ENCODE measurements at regions of chr10 and their contacts with region 1.

Region 1: DNA sequence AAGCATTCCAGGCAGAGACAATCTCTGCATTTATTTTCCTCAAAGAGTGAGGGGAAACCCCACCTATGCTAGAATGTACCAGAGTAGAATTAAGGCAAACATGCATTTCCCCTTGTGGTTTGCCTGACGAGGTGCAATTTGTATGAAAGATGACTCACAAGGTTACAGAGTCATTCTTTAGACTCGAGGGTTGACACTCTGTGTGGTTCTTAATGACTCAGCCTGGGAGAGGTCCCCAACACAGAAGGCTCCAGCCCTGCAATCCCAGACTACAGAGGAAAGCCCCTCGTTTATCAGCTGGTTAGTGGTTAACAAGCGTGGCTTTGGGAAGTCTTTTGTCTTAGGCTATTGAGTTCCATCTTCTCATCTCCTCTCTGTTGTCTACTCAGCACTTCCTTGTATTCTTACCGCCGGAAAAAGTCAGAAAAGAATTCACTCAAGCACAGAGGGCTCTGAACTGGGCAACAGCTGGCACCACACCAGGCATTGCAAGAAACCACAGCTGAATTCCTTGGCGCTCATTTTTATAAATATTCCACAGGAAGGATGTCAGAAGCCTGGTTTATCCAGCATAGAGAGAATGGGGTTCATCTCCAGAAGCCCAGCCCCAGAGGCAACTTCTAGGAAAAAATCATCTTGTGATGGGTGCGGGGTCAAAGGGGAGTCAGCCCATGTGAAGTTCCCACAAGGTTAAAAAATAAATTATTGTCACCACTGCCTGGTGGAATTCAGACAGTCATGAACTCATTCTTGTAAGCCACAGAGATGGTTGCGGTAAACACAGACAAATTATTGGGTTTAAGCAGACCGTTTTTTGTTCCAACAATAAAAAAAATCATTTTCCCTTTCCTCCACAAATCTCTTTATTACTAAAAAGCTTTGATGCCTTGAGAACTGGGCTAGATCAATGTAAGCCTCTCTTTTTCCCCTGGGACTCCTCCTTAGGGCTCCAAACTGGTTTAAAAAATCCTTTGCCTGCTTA is 24.5 kb upstream of the SVIL start:
- DNase-seq: peak; percentile 64
- H3K4me3 Mint-ChIP-seq: no peak overlapping the region
- H3K27ac Mint-ChIP-seq: peak overlapping the region; percentile 27
- H3K4me1 Mint-ChIP-seq: peaks cover 19% of the 10 kb centered on the region
- H3K27me3 Mint-ChIP-seq: peaks cover 14% of the 10 kb centered on the region

Region 2: GRCh38 chr10:29409241-29410057 is 249.8 kb before region 1 on chr10:
- intact Hi-C with region 1: loop called (anchors 1 kb)
- DNase-seq: peak; percentile 36
- H3K4me3 Mint-ChIP-seq: peak overlapping the region; percentile 97
- H3K27ac Mint-ChIP-seq: peak overlapping the region; percentile 89
- H3K4me1 Mint-ChIP-seq: peaks cover 31% of the 10 kb centered on the region
- H3K27me3 Mint-ChIP-seq: no peaks in the 10 kb centered on the region

Region 3: GRCh38 chr10:29470355-29470705 is 188.9 kb before region 1 on chr10:
- intact Hi-C with region 1: no loop called
- DNase-seq: no peak
- H3K4me3 Mint-ChIP-seq: no peak overlapping the region
- H3K27ac Mint-ChIP-seq: no peak overlapping the region
- H3K4me1 Mint-ChIP-seq: peaks cover 28% of the 10 kb centered on the region
- H3K27me3 Mint-ChIP-seq: no peaks in the 10 kb centered on the region

Region 4: DNA sequence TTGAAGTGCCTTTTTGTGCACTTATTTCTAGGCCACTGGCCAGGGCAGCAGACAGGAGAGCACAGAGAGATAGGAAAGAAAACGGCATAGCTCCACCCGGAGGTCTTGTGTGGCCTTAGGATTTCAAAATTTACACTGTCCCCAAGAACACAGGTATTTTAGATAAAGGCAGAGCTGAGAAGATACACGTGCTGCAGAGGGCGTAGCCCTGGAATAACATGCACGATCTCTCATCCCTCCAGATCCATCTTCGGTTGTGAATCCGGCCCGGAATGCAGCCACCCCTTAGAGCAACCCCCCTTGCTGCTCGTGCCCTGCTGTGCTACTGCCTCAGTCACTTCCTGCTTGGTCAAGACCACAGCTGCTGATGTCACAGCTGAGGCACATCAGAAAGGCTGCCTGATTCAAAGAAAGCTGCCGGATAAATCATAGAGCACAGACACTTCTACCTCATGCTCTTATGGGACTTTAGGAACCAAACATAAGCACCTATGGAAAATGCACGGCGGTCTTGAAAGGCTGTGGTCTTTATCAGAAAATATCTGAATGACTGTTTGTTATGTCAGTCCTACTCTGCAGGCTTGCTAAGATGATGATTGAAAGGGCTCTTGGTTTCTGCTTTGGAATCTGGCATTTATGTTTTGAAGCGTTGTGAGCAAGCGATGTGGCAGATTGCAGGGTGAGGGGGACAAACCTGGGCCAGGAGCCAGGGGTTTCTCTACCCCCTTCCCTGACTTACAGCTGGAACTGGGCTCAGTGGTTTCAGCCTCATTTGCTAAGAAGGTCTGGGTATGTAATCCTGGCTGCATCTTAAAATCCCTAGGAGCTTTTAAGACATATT is 176.5 kb before region 1 on chr10:
- intact Hi-C with region 1: loop called (anchors 1 kb)
- DNase-seq: peak; percentile 22
- H3K4me3 Mint-ChIP-seq: peak overlapping the region; percentile 0
- H3K27ac Mint-ChIP-seq: peak overlapping the region; percentile 74
- H3K4me1 Mint-ChIP-seq: peaks cover 56% of the 10 kb centered on the region
- H3K27me3 Mint-ChIP-seq: no peaks in the 10 kb centered on the region

Region 5: DNA sequence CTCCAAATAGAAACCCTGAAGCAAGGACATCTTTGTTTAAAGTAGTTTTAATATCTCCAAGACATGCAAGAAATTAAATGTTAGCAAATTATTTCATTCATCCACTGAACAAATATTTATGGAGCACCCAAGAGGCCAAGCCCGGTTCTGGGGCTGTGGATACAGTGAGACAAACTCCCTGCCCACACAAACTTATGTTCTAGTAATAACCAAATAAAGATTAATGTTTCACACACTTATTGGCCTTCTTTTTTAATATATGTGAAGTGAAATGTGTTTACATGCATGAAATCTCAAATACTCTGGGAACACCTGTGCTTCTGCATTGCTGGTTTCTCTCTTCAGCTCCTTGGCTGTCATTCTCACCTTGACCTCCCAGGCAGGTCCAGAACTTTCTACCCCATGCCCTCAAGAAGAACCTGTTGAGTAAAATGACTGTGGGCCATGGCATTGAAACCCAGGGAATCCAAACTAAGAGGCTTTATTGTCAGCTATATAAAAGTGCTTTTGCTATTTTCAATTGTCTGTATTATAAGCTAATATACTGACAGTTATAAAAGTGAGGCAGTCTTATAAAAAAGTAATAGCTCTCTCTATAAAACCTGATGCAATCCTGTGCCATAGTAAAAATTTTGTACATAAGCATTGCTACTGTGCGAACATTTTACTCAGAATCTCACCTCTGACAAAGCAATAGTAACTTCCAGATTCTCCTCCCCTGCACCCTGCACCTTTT is 68.2 kb before region 1 on chr10:
- intact Hi-C with region 1: loop called (anchors 2 kb)
- DNase-seq: no peak
- H3K4me3 Mint-ChIP-seq: no peak overlapping the region
- H3K27ac Mint-ChIP-seq: peak overlapping the region; percentile 83
- H3K4me1 Mint-ChIP-seq: peaks cover 9% of the 10 kb centered on the region
- H3K27me3 Mint-ChIP-seq: no peaks in the 10 kb centered on the region

Region 6: DNA sequence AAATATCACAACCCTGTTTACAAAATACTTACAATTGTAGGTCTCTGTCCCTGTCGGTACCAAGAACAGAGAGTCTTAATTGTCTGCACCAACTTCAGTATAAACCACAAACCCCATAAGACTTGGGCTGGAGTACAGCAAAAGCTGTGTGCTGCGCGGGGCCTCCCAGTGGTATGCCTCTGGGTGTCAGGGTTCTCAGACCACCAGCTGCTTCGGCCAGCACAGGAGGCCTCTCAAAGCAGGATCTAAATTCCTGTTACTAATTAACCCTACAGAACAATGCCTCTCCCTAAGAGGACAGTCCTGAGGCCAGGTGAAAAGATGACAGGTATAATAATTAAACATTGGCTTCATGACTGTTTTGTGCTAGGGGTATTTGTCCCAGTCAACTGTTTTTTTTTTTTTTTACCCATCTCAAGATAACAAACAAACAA is 23.5 kb before region 1 on chr10:
- intact Hi-C with region 1: loop called (anchors 1 kb)
- DNase-seq: no peak
- H3K4me3 Mint-ChIP-seq: no peak overlapping the region
- H3K27ac Mint-ChIP-seq: no peak overlapping the region
- H3K4me1 Mint-ChIP-seq: peaks cover 28% of the 10 kb centered on the region
- H3K27me3 Mint-ChIP-seq: no peaks in the 10 kb centered on the region

Region 7: GRCh38 chr10:29689001-29689400 is 29.7 kb after region 1 on chr10:
- intact Hi-C with region 1: loop called (anchors 1 kb)
- DNase-seq: no peak
- H3K4me3 Mint-ChIP-seq: no peak overlapping the region
- H3K27ac Mint-ChIP-seq: no peak overlapping the region
- H3K4me1 Mint-ChIP-seq: peaks cover 13% of the 10 kb centered on the region
- H3K27me3 Mint-ChIP-seq: peaks cover 5% of the 10 kb centered on the region

Region 8: DNA sequence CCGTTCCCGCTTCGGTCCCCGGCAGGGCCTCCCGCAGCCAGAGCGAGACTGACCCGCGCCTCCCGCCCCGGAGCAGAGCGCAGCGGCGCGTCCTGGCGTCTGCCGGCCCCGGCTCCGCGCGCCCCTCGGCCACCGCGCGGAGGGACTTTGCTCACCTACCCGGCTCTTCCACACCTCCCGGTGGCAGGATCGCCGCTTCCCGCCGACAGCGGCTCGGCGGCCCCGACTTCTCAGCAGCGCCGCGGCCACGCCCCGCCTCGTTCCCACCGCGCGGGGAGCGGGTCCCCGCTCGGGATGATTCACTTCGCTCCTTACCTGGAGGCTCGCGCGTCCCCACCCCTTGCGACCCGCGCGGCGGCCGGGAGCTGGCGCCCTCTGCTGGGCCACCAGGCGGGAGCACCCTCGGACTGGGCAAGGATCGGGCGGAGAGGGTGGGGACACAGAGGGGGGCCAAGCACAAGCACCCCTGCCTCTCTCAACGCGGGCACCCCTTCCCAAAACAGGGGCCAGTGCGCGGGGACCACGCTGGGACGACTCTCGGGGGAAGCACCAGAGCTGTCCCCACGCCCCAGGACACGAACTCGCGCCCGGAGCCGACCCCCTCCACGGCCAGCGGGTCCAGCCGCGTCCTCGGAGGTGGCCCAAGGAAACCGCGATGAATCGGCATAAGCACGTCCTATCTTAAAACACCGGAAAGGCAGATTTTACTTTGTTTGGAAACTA is 76.5 kb after region 1 on chr10:
- intact Hi-C with region 1: loop called (anchors 2 kb)
- DNase-seq: peak; percentile 79
- H3K4me3 Mint-ChIP-seq: peak overlapping the region; percentile 77
- H3K27ac Mint-ChIP-seq: peak overlapping the region; percentile 66
- H3K4me1 Mint-ChIP-seq: peaks cover 12% of the 10 kb centered on the region
- H3K27me3 Mint-ChIP-seq: peaks cover 36% of the 10 kb centered on the region

Region 9: GRCh38 chr10:30048768-30049517 is 389.7 kb after region 1 on chr10:
- intact Hi-C with region 1: no loop called
- DNase-seq: no peak
- H3K4me3 Mint-ChIP-seq: peak overlapping the region; percentile 76
- H3K27ac Mint-ChIP-seq: peak overlapping the region; percentile 31
- H3K4me1 Mint-ChIP-seq: peaks cover 59% of the 10 kb centered on the region
- H3K27me3 Mint-ChIP-seq: peaks cover 12% of the 10 kb centered on the region

Measured in activated T-helper 2 cell treated with anti-CD3 and anti-CD28 coated beads, Interferon-gamma antibody, Interleukin-2, Interleukin-4, amounts not matched to agents 10 μg/mL and 5 μg/mL and 100 μg/mL, durations not matched to agents 14 hours and 24 hours and 36 hours (primary cell).